Activated CD8-positive, alpha-beta T cell treated with anti-CD3 and anti-CD28 coated beads for 36 hours (primary cell): ENCODE measurements at regions of chr10 and their contacts with region 1.

Region 1: GRCh38 chr10:13440185-13441061 is 88.4 kb downstream of the BEND7 start:
- DNase-seq: peak; percentile 72
- ATAC-seq: peak; percentile 93
- H3K4me3 Mint-ChIP-seq: peak overlapping the region; percentile 20
- H3K27ac Mint-ChIP-seq: no peak overlapping the region
- H3K4me1 Mint-ChIP-seq: peaks cover 11% of the 10 kb centered on the region
- H3K27me3 Mint-ChIP-seq: peaks cover 43% of the 10 kb centered on the region
- CTCF ChIP-seq: peak; percentile 88

Region 2: GRCh38 chr10:13371897-13372470 is 68.4 kb before region 1 on chr10:
- CTCF ChIA-PET with region 1: interaction called, 168 read pairs
- POLR2A ChIA-PET with region 1: no interaction called
- intact Hi-C with region 1: loop called (anchors 2 kb)
- DNase-seq: peak; percentile 77
- ATAC-seq: peak; percentile 100
- H3K4me3 Mint-ChIP-seq: no peak overlapping the region
- H3K27ac Mint-ChIP-seq: no peak overlapping the region
- H3K4me1 Mint-ChIP-seq: no peaks in the 10 kb centered on the region
- H3K27me3 Mint-ChIP-seq: no peaks in the 10 kb centered on the region
- CTCF ChIP-seq: peak; percentile 88

Region 3: GRCh38 chr10:13382703-13383398 is 57.6 kb before region 1 on chr10:
- CTCF ChIA-PET with region 1: interaction called, 12 read pairs
- POLR2A ChIA-PET with region 1: no interaction called
- intact Hi-C with region 1: no loop called
- DNase-seq: no peak
- ATAC-seq: no peak
- H3K4me3 Mint-ChIP-seq: no peak overlapping the region
- H3K27ac Mint-ChIP-seq: no peak overlapping the region
- H3K4me1 Mint-ChIP-seq: peaks cover 9% of the 10 kb centered on the region
- H3K27me3 Mint-ChIP-seq: peaks cover 37% of the 10 kb centered on the region
- CTCF ChIP-seq: no peak

Region 4: GRCh38 chr10:13388478-13389230 is 51.8 kb before region 1 on chr10:
- CTCF ChIA-PET with region 1: interaction called, 13 read pairs
- POLR2A ChIA-PET with region 1: no interaction called
- intact Hi-C with region 1: no loop called
- DNase-seq: no peak
- ATAC-seq: no peak
- H3K4me3 Mint-ChIP-seq: no peak overlapping the region
- H3K27ac Mint-ChIP-seq: no peak overlapping the region
- H3K4me1 Mint-ChIP-seq: no peaks in the 10 kb centered on the region
- H3K27me3 Mint-ChIP-seq: peaks cover 12% of the 10 kb centered on the region
- CTCF ChIP-seq: no peak

Region 5: DNA sequence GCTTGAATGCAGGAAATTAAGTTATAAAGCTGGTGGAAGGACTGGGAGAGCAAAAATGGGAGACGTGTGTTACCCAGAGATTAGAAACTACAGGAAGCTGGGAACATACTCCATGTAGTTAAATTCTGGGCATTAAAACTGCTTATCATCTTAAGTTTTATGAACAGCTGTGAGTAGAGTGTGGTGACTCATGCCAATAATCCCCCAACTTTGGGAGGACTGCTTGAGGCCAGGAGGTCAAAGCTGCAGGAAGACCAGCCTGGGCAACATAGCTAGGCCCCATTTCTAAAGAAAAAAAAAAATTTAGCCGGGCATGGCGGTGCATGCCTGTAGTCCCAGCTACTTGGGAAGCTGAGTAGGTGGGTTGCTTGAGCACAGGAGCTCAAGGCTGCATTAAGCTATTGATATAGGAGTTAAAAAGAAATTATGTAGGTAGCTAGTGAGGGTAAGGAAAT is 36.1 kb before region 1 on chr10:
- CTCF ChIA-PET with region 1: interaction called, 12 read pairs
- POLR2A ChIA-PET with region 1: no interaction called
- intact Hi-C with region 1: no loop called
- DNase-seq: no peak
- ATAC-seq: no peak
- H3K4me3 Mint-ChIP-seq: no peak overlapping the region
- H3K27ac Mint-ChIP-seq: no peak overlapping the region
- H3K4me1 Mint-ChIP-seq: no peaks in the 10 kb centered on the region
- H3K27me3 Mint-ChIP-seq: peaks cover 11% of the 10 kb centered on the region
- CTCF ChIP-seq: no peak

Region 6: DNA sequence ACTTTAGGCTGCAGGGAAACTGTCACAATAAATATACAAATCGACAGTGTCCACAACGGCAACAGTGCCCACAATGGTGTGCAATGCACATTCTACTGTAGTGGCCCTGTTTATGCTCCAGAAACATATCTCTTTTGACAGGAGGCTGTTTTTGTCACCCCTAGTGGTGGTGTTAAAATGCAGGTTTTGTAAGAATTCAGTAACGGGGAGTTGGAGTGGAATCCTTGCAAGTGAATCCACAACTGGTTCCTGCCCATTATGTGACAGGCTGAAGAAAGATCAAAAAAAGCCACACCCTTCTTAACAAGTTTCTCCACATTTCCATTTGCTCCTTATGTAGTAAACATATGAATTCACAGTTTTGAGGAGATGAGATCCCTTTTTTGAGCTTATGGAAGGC is 29.8 kb after region 1 on chr10:
- CTCF ChIA-PET with region 1: interaction called, 14 read pairs
- POLR2A ChIA-PET with region 1: no interaction called
- intact Hi-C with region 1: no loop called
- DNase-seq: no peak
- ATAC-seq: no peak
- H3K4me3 Mint-ChIP-seq: no peak overlapping the region
- H3K27ac Mint-ChIP-seq: no peak overlapping the region
- H3K4me1 Mint-ChIP-seq: no peaks in the 10 kb centered on the region
- H3K27me3 Mint-ChIP-seq: no peaks in the 10 kb centered on the region
- CTCF ChIP-seq: no peak

Region 7: DNA sequence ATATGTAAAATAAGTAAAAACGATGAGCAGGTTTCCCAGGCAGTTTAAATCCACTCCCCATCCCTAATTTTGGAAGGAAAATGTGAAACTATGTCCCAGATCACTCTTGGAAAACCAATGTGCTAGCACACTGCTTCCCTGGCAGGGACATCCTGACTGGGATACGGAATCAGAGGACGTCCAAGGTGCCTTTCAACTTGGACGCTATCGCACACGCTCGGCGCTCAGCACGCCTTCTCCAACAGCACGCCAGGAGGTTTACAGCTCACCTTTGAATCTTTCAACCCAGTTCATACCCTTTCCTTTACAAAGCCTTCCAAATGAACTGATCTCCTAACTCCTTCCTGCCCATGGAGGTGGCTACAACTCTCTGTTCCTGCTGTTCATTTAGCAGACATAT is 41.3 kb after region 1 on chr10:
- CTCF ChIA-PET with region 1: interaction called, 15 read pairs
- POLR2A ChIA-PET with region 1: interaction called, 3 read pairs
- intact Hi-C with region 1: no loop called
- DNase-seq: no peak
- ATAC-seq: no peak
- H3K4me3 Mint-ChIP-seq: no peak overlapping the region
- H3K27ac Mint-ChIP-seq: no peak overlapping the region
- H3K4me1 Mint-ChIP-seq: peaks cover 3% of the 10 kb centered on the region
- H3K27me3 Mint-ChIP-seq: peaks cover 12% of the 10 kb centered on the region
- CTCF ChIP-seq: no peak

Region 8: GRCh38 chr10:13644866-13645265 is 204.4 kb after region 1 on chr10:
- CTCF ChIA-PET with region 1: no interaction called
- POLR2A ChIA-PET with region 1: no interaction called
- intact Hi-C with region 1: no loop called
- DNase-seq: no peak
- ATAC-seq: no peak
- H3K4me3 Mint-ChIP-seq: no peak overlapping the region
- H3K27ac Mint-ChIP-seq: no peak overlapping the region
- H3K4me1 Mint-ChIP-seq: peaks cover 7% of the 10 kb centered on the region
- H3K27me3 Mint-ChIP-seq: no peaks in the 10 kb centered on the region
- CTCF ChIP-seq: no peak